Right lobe of liver (tissue), 6 donors: ENCODE measurements at regions of chr11 and their contacts with region 1.

Region 1: GRCh38 chr11:57751676-57752253 is at the start of gene BTBD18:
- DNase-seq: no peak
- ATAC-seq: peak; percentile 91 to 95 (median 94)
- H3K4me3 ChIP-seq: no peak within 1 kb of the TSS
- H3K27ac ChIP-seq: no peak within 1 kb of the TSS
- H3K4me1 ChIP-seq: peaks cover 0 to 3% (median 0%) of the 10 kb centered on the region in 4 donors
- H3K27me3 ChIP-seq: no peaks in the 10 kb centered on the region
- CTCF ChIP-seq: peak; percentile 50 to 60 (median 56)
- POLR2A ChIP-seq: no peak
- total RNA-seq, gene BTBD18: not detected

Region 2: DNA sequence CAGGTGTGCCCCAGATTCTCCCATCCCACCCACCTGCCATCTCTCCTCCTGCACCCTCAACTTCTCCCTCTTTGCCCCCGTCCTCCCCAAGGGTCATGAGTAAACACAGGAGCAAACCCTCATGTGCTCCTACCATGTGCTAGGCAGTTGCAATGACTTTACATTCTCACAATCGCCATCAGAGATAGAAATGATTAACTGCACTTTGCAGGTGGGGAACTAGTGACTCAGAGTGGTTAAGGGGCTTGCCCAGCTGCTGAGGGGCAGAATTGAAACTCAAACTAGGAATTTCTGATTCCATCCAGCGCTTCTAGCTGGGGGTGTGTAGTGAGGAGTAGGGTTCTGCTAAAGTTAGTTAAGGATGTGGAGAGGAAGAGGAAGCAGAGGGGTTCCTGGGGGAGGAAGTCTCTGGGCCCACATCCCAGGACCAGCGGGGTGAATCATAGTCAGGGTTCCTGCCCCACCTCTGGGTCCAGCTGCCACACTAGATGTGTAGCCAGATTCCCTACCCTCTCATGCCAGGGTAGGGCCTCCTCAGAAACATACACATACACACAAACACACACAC is 345.3 kb before region 1 on chr11:
- intact Hi-C with region 1: no loop called
- DNase-seq: no peak
- ATAC-seq: peak; percentile 19 to 78 (median 42)
- H3K4me3 ChIP-seq: no peak overlapping the region
- H3K27ac ChIP-seq: no peak overlapping the region
- H3K4me1 ChIP-seq: no peaks in the 10 kb centered on the region
- H3K27me3 ChIP-seq: no peaks in the 10 kb centered on the region
- CTCF ChIP-seq: no peak
- POLR2A ChIP-seq: no peak

Region 3: DNA sequence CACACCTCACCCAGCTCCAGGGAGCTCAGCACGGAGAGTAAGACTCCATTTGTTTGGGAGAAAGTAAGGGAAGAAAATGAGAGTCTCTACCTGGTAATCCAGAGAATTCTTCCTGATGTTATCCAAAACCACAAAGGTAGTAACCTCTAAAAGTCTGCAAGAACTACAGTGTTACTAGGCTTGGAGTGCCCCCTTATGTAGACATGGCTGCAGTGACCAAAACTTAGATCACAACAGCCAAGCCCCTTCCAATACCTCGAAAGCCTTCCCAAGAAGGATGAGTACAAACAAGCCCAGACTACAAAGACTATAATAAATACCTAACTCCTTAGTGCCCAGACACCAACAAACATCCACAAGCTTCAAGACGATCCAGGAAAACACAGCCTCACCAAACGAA is 189.2 kb before region 1 on chr11:
- intact Hi-C with region 1: no loop called
- DNase-seq: no peak
- ATAC-seq: no peak
- H3K4me3 ChIP-seq: no peak overlapping the region
- H3K27ac ChIP-seq: no peak overlapping the region
- H3K4me1 ChIP-seq: peaks cover 0 to 14% (median 3%) of the 10 kb centered on the region in 4 donors
- H3K27me3 ChIP-seq: no peaks in the 10 kb centered on the region
- CTCF ChIP-seq: no peak
- POLR2A ChIP-seq: no peak

Region 4: GRCh38 chr11:57641011-57641807 is 110.6 kb before region 1 on chr11:
- intact Hi-C with region 1: no loop called
- DNase-seq: peak in 1 of 3 donors; percentile 51
- ATAC-seq: peak; percentile 51 to 65 (median 61)
- H3K4me3 ChIP-seq: no peak overlapping the region
- H3K27ac ChIP-seq: peak overlapping the region in 1 of 3 donors; percentile 53
- H3K4me1 ChIP-seq: peaks cover 0 to 33% (median 8%) of the 10 kb centered on the region in 4 donors
- H3K27me3 ChIP-seq: peaks cover 0 to 2% of the 10 kb centered on the region in 2 donors
- CTCF ChIP-seq: peak; percentile 46 to 57 (median 55)
- POLR2A ChIP-seq: no peak

Region 5: DNA sequence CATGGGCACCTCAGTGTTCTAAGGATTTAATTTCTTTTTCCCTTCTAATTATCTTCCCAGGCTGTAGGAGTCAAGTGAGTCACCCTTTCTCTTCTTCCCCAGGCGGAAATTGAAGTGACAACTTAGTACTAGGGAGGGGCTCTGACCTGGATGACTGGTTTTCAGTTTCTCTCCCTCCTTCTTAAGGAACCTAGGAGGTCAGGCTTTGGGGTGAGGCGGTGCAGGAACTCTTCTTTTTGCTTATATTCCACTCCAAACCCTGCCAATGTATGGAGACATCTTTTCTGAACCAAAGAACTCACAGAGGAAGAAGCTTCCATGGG is 71.3 kb before region 1 on chr11:
- intact Hi-C with region 1: no loop called
- DNase-seq: no peak
- ATAC-seq: no peak
- H3K4me3 ChIP-seq: no peak overlapping the region
- H3K27ac ChIP-seq: peak overlapping the region in 1 of 3 donors; percentile 8
- H3K4me1 ChIP-seq: peaks cover 0 to 30% (median 16%) of the 10 kb centered on the region in 4 donors
- H3K27me3 ChIP-seq: no peaks in the 10 kb centered on the region
- CTCF ChIP-seq: no peak
- POLR2A ChIP-seq: no peak

Region 6: DNA sequence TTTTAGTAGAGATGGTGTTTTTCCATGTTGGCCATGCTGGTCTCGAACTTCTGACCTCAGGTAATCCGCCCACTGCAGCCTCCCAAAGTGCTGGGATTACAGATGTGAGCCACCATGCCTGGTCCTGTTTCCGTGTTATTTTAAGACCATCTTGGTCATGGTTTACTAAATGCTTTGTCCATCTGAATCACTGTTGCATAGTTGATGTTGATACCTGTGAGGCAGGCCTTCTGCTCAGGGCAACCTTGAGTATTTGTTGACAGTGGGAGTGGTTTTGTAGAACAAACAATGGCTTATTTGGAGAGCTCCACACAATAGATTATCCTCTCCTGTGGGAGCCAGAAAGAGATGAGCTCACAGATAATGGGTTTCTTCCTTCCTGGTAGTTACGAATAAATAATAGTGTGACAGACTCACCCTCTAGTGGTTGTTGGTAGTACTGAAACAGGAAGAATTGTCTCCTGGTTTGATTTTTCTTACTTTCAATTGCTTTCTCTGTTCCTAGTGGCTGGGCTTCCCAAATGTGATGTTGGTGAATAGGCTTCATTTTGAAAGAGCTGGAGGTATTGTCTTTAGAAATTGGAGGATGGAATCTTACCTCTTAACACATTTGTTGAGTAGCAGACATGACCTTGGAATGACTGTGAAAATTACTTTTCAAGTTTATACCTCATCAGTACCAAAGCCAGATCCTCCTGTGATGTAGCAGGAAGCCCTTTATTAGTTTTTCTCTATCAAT is 48.8 kb after region 1 on chr11:
- intact Hi-C with region 1: loop called in 1 of 2 experiments (anchors 5 kb)
- DNase-seq: no peak
- ATAC-seq: peak; percentile 88 to 94 (median 91)
- H3K4me3 ChIP-seq: no peak overlapping the region
- H3K27ac ChIP-seq: peak overlapping the region in 2 of 3 donors; percentile 35 to 47
- H3K4me1 ChIP-seq: peaks cover 0 to 31% (median 17%) of the 10 kb centered on the region in 4 donors
- H3K27me3 ChIP-seq: no peaks in the 10 kb centered on the region
- CTCF ChIP-seq: peak; percentile 87 to 99 (median 90)
- POLR2A ChIP-seq: no peak